ENCODE measurements at regions of chr2 and their contacts with region 1.

Region 1: GRCh38 chr2:18651842-18652774 is 62.7 kb upstream of the NT5C1B start:
- DNase-seq: no peak
- H3K4me3 ChIP-seq: no peak overlapping the region
- H3K27ac ChIP-seq: peak overlapping the region; percentile 73 to 78
- H3K4me1 ChIP-seq: peaks cover 3 to 12% of the 10 kb centered on the region in 2 donors
- H3K27me3 ChIP-seq: no peaks in the 10 kb centered on the region
- CTCF ChIP-seq: no peak

Region 2: GRCh38 chr2:18311420-18312195 is 340.5 kb before region 1 on chr2:
- intact Hi-C with region 1: no loop called
- DNase-seq: no peak
- H3K4me3 ChIP-seq: no peak overlapping the region
- H3K27ac ChIP-seq: peak overlapping the region in 1 of 2 donors; percentile 34
- H3K4me1 ChIP-seq: peaks cover 0 to 3% of the 10 kb centered on the region in 2 donors
- H3K27me3 ChIP-seq: no peaks in the 10 kb centered on the region
- CTCF ChIP-seq: no peak

Region 3: DNA sequence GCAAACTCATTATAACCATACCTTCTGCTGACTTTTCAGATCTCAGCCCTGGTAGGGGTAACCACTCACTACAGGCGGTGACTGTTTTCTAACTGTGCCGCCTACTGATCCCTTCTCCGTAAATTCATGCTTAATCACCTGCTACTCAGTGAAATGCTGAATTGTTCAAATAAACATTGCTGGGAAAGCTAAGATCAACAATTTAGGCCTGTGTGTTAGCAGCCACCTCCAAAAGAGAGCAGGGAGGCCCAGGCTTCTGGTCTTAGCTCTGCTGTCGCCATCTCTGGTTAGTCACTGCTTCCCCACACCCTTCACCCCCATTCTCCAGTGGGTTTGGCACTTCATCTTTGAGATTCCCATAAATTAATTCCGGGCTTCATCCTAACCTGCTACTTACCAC is 40.9 kb before region 1 on chr2:
- intact Hi-C with region 1: loop called (anchors 5 kb)
- DNase-seq: no peak
- H3K4me3 ChIP-seq: no peak overlapping the region
- H3K27ac ChIP-seq: peak overlapping the region in 1 of 2 donors; percentile 44
- H3K4me1 ChIP-seq: peaks cover 0 to 10% of the 10 kb centered on the region in 2 donors
- H3K27me3 ChIP-seq: no peaks in the 10 kb centered on the region
- CTCF ChIP-seq: no peak

Measured in ascending aorta (tissue), 2 donors.